Sigmoid colon (tissue), 7 donors: ENCODE measurements at regions of chr6 and their contacts with region 1.

Region 1: DNA sequence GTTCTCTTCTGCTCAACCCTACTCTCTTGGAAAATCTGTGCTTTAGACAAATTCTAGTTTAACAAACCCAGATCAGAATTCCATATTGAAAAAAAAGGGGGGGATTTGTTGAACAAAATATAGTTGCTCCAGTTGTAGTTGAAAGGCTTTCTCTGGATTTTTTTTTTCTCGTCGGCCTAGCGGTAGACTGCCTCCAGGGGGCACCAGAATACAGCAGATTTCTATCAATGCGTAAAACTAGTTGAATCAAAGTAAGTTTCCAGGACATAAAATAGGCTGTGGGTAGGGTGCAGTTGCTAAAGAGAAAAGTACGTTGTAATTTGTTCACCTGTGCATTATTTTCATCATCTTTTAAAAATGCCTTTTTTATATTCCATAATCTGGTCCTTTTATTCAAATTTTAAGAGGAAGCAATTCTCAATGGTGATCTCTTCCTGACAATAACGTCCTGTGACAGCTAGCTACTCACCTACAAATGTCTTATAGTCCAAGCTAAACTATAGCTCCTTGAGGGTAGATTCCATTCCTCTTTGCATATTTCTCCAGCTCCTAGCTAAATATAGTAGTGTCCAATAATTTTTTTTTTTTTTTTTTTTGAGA is 105.4 kb downstream of the PERP start:
- DNase-seq: peak; percentile 76
- H3K4me3 ChIP-seq: no peak overlapping the region
- H3K27ac ChIP-seq: no peak overlapping the region
- H3K4me1 ChIP-seq: no peaks in the 10 kb centered on the region
- H3K27me3 ChIP-seq: no peaks in the 10 kb centered on the region
- CTCF ChIP-seq: peak; percentile 47 to 80 (median 77)
- EP300 ChIP-seq: no peak
- POLR2A ChIP-seq: no peak

Region 2: DNA sequence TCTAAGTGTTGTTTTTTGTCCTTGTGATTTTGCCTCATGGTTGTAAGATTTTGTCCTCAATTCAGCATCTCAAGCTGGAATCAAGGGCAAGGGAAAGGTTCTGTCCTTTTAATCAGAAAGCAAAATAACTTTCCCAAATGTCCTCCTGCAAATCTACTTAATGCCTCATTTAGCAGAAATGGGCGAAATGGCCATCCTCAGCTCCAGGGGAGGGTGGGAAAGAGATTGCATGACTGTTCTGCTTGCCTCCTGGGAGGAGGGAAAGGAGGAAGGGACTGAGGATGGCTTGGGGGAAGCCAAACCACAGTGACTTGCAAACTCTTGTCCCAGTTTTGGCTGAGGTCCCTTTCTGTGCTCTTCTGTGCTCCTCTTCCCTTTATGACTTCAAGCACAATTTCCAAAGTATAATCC is 91.4 kb before region 1 on chr6:
- intact Hi-C with region 1: no loop called
- DNase-seq: no peak
- H3K4me3 ChIP-seq: no peak overlapping the region
- H3K27ac ChIP-seq: no peak overlapping the region
- H3K4me1 ChIP-seq: no peaks in the 10 kb centered on the region
- H3K27me3 ChIP-seq: no peaks in the 10 kb centered on the region
- CTCF ChIP-seq: no peak
- EP300 ChIP-seq: no peak
- POLR2A ChIP-seq: no peak

Region 3: GRCh38 chr6:138109042-138109997 is 107.5 kb after region 1 on chr6:
- intact Hi-C with region 1: loop called (anchors 1 kb)
- DNase-seq: peak; percentile 80
- H3K4me3 ChIP-seq: no peak overlapping the region
- H3K27ac ChIP-seq: peak overlapping the region; percentile 82 to 92 (median 88)
- H3K4me1 ChIP-seq: peaks cover 0 to 31% (median 24%) of the 10 kb centered on the region in 4 donors
- H3K27me3 ChIP-seq: no peaks in the 10 kb centered on the region
- CTCF ChIP-seq: peak; percentile 90 to 97 (median 94)
- EP300 ChIP-seq: no peak
- POLR2A ChIP-seq: no peak

Region 4: GRCh38 chr6:138289739-138290138 is 287.9 kb after region 1 on chr6:
- intact Hi-C with region 1: loop called (anchors 10 kb)
- DNase-seq: no peak
- H3K4me3 ChIP-seq: no peak overlapping the region
- H3K27ac ChIP-seq: no peak overlapping the region
- H3K4me1 ChIP-seq: peaks cover 0 to 9% (median 2%) of the 10 kb centered on the region in 4 donors
- H3K27me3 ChIP-seq: no peaks in the 10 kb centered on the region
- CTCF ChIP-seq: no peak
- EP300 ChIP-seq: no peak
- POLR2A ChIP-seq: no peak

Region 5: DNA sequence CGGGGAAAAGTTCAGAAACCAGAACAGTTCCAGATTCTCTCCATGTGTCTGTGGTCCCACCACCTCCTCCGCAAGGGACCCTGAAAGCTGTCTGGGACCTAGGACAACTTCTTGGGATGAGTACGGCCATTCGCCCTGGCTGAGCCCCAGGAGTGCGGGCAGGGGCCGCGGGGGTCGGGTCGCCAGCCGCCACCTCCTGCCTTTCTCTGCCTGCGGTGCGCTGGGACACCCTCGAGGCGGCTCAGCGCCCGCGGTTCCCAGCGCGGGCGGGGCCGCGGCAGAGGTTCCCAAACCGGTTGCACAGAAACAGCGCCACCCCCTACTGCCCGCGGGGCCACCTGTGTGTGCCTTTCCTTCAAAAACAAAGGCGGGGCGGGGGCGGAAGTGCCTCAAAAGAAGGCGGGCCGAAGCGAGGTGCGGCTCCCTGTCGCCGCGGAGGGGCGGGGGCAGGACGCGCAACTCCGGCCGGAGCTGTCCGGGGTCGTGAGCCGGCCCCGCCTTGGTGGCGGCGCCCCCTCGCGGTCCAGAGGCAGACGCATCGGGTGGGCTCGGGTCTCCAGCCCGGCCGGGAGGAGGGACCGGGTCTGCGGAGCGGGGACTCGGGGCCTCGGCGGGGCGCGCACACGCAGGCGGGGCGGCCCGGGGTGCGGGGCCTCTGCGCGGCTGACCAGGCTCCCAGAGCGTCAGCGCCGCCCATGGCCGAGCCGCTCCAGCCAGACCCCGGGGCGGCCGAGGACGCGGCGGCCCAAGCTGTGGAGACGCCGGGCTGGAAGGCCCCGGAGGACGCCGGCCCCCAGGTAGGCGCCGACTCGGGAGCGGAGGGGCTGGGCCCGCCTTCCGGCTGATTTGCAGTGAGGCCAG is 402.2 kb after region 1 on chr6 and contains the start of gene HEBP2:
- intact Hi-C with region 1: loop called (anchors 10 kb)
- DNase-seq: peak; percentile 96
- H3K4me3 ChIP-seq: peak within 1 kb of the TSS; percentile 66 to 95 (median 76)
- H3K27ac ChIP-seq: peak within 1 kb of the TSS; percentile 90 to 94 (median 92)
- H3K4me1 ChIP-seq: peaks cover 0 to 15% (median 11%) of the 10 kb centered on the region in 4 donors
- H3K27me3 ChIP-seq: no peaks in the 10 kb centered on the region
- CTCF ChIP-seq: peak in 1 of 4 experiments; percentile 44
- EP300 ChIP-seq: no peak
- POLR2A ChIP-seq: peak; percentile 35 to 63
- total RNA-seq, gene HEBP2: 46.3 to 75.3 (median 65.5) TPM